H1 (cell line): ENCODE measurements at regions of chrX and their contacts with region 1.

Region 1: DNA sequence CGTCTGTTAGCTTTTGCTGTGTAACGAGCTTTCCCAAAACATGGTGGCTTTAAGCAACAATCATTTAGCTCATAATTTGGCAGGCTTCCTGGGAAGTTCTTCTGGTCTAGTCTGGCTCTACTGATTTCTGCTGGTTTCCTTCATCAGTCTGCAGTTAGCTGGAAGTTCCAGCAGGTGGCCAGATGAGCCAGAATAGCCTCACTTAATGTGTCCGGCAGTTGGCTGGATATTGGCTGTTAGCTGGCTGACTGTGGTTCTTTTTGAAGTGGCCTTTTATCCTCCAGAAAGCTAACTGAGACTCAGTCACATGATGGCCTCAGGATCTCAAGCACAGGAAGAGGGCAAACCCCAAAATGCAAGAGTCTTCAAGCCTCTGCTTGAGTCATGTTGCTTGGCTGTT is 34.9 kb downstream of the FTHL17 start:
- DNase-seq: peak in 1 of 2 experiments; percentile 45
- H3K4me3 ChIP-seq: no peak overlapping the region
- H3K27ac ChIP-seq: no peak overlapping the region
- H3K4me1 ChIP-seq: no peaks in the 10 kb centered on the region
- H3K27me3 ChIP-seq: no peaks in the 10 kb centered on the region
- CTCF ChIP-seq: peak; percentile 28 to 64 (median 56)
- EP300 ChIP-seq: no peak
- POLR2A ChIP-seq: no peak
- RAD21 ChIP-seq: peak; percentile 65 to 73

Region 2: GRCh38 chrX:30935985-30936384 is 100.9 kb before region 1 on chrX:
- CTCF ChIA-PET with region 1: interaction called, 11 read pairs
- POLR2A ChIA-PET with region 1: no interaction called
- DNase-seq: no peak
- H3K4me3 ChIP-seq: no peak overlapping the region
- H3K27ac ChIP-seq: no peak overlapping the region
- H3K4me1 ChIP-seq: no peaks in the 10 kb centered on the region
- H3K27me3 ChIP-seq: no peaks in the 10 kb centered on the region
- CTCF ChIP-seq: peak in 2 of 3 experiments; percentile 18 to 35; a peak in 2 of 4 replicates
- EP300 ChIP-seq: no peak
- POLR2A ChIP-seq: no peak
- RAD21 ChIP-seq: peak; percentile 36 to 39

Region 3: GRCh38 chrX:31021537-31021936 is 15.4 kb before region 1 on chrX:
- CTCF ChIA-PET with region 1: interaction called, 16 read pairs
- POLR2A ChIA-PET with region 1: interaction called, 3 read pairs
- DNase-seq: no peak
- H3K4me3 ChIP-seq: no peak overlapping the region
- H3K27ac ChIP-seq: no peak overlapping the region
- H3K4me1 ChIP-seq: no peaks in the 10 kb centered on the region
- H3K27me3 ChIP-seq: no peaks in the 10 kb centered on the region
- CTCF ChIP-seq: no peak
- EP300 ChIP-seq: no peak
- POLR2A ChIP-seq: no peak
- RAD21 ChIP-seq: no peak

Region 4: GRCh38 chrX:31053621-31054020 is 16.7 kb after region 1 on chrX:
- CTCF ChIA-PET with region 1: interaction called, 24 read pairs
- POLR2A ChIA-PET with region 1: no interaction called
- DNase-seq: no peak
- H3K4me3 ChIP-seq: no peak overlapping the region
- H3K27ac ChIP-seq: no peak overlapping the region
- H3K4me1 ChIP-seq: no peaks in the 10 kb centered on the region
- H3K27me3 ChIP-seq: no peaks in the 10 kb centered on the region
- CTCF ChIP-seq: no peak
- EP300 ChIP-seq: no peak
- POLR2A ChIP-seq: no peak
- RAD21 ChIP-seq: no peak

Region 5: GRCh38 chrX:31099536-31100090 is 62.7 kb after region 1 on chrX:
- CTCF ChIA-PET with region 1: no interaction called
- POLR2A ChIA-PET with region 1: no interaction called
- DNase-seq: no peak
- H3K4me3 ChIP-seq: no peak overlapping the region
- H3K27ac ChIP-seq: no peak overlapping the region
- H3K4me1 ChIP-seq: no peaks in the 10 kb centered on the region
- H3K27me3 ChIP-seq: no peaks in the 10 kb centered on the region
- CTCF ChIP-seq: no peak
- EP300 ChIP-seq: no peak
- POLR2A ChIP-seq: no peak
- RAD21 ChIP-seq: no peak

Region 6: DNA sequence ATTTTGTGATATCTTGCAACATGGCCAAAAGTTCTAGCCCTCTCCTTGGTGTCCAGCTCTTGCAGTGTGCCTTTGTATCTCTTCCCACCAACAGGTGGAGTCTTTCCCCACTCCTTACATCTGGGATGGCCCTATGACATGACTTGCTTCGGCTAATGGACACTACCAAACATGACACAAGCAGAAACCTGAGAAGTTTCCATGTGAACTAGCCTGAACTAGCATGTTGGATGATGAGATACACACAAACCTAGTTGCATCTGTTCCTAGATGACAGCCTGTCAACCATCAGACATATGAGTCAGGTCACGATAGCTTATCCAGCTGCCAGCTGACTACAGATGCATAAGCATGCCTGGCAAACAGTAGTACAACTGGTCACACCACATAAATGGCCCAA is 242.5 kb after region 1 on chrX:
- CTCF ChIA-PET with region 1: interaction called, 17 read pairs
- POLR2A ChIA-PET with region 1: no interaction called
- DNase-seq: no peak
- H3K4me3 ChIP-seq: no peak overlapping the region
- H3K27ac ChIP-seq: no peak overlapping the region
- H3K4me1 ChIP-seq: no peaks in the 10 kb centered on the region; a peak in 1 of 7 replicates
- H3K27me3 ChIP-seq: no peaks in the 10 kb centered on the region
- CTCF ChIP-seq: peak; percentile 15 to 59 (median 30); a peak in 3 of 4 replicates
- EP300 ChIP-seq: no peak
- POLR2A ChIP-seq: no peak
- RAD21 ChIP-seq: peak; percentile 53 to 71

Region 7: GRCh38 chrX:31293409-31293808 is 256.5 kb after region 1 on chrX:
- CTCF ChIA-PET with region 1: interaction called, 22 read pairs
- POLR2A ChIA-PET with region 1: no interaction called
- DNase-seq: no peak
- H3K4me3 ChIP-seq: no peak overlapping the region
- H3K27ac ChIP-seq: no peak overlapping the region
- H3K4me1 ChIP-seq: no peaks in the 10 kb centered on the region
- H3K27me3 ChIP-seq: no peaks in the 10 kb centered on the region
- CTCF ChIP-seq: peak in 1 of 3 experiments; percentile 17; a peak in 2 of 4 replicates
- EP300 ChIP-seq: no peak
- POLR2A ChIP-seq: no peak
- RAD21 ChIP-seq: peak; percentile 61 to 63

Region 8: DNA sequence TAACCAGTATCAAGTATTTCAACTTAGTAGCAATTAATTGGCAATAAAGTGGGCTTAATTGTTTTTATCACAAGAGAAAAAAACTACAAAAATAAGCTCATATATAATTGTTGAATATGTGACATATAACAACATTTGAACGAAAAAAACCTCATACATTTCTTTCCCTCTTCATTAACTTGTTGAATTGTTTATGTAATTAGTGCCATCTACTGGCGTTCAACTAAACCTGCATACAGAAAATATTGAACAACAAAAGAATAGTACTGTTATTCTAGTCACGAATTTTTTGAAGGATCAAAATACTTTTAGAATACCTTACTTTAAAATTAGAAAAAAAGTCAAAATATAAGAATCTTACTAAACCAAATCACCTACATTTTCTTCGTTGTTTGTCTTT is 621.5 kb after region 1 on chrX:
- CTCF ChIA-PET with region 1: interaction called, 10 read pairs
- POLR2A ChIA-PET with region 1: no interaction called
- DNase-seq: no peak
- H3K4me3 ChIP-seq: no peak overlapping the region
- H3K27ac ChIP-seq: no peak overlapping the region
- H3K4me1 ChIP-seq: no peaks in the 10 kb centered on the region
- H3K27me3 ChIP-seq: no peaks in the 10 kb centered on the region
- CTCF ChIP-seq: peak in 1 of 3 experiments; percentile 15; a peak in 1 of 4 replicates
- EP300 ChIP-seq: no peak
- POLR2A ChIP-seq: no peak
- RAD21 ChIP-seq: peak in 1 of 2 experiments; percentile 50; a peak in 3 of 4 replicates